ENCODE measurements at regions of chr9 and their contacts with region 1.

Region 1: GRCh38 chr9:82961504-82962125 is 101.3 kb downstream of the RASEF start:
- DNase-seq: peak; percentile 90
- H3K4me3 ChIP-seq: no peak overlapping the region
- H3K27ac ChIP-seq: no peak overlapping the region
- H3K4me1 ChIP-seq: no peaks in the 10 kb centered on the region
- H3K27me3 ChIP-seq: no peaks in the 10 kb centered on the region
- CTCF ChIP-seq: peak; percentile 66

Region 2: DNA sequence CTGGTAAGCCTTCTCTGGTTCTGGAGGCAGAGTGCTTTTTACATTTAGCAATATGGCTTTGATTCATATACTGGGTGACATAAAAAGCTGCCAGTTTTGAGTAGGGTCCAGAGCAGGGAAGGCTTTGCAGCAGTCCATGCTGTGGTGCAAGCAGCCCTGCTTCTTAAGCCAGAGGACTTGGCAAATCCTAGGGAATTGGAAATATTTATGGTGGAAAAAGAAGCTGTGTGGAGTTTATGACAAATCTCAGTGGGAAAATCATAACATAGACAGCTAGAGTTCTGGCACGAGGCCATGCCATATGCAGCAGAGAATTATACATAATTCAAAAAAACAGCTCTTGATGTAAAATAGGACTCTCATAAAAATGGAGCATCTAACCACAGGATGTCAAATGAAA is 435.0 kb before region 1 on chr9:
- intact Hi-C with region 1: loop called (anchors 10 kb)
- DNase-seq: no peak
- H3K4me3 ChIP-seq: no peak overlapping the region
- H3K27ac ChIP-seq: no peak overlapping the region
- H3K4me1 ChIP-seq: no peaks in the 10 kb centered on the region
- H3K27me3 ChIP-seq: no peaks in the 10 kb centered on the region
- CTCF ChIP-seq: no peak